Psoas muscle (tissue), 8 donors: ENCODE measurements at regions of chr7 and their contacts with region 1.

Region 1: GRCh38 chr7:68813551-68814080 is 784.7 kb upstream of the AUTS2 start:
- DNase-seq: no peak
- ATAC-seq: no peak
- H3K4me3 ChIP-seq: no peak overlapping the region
- H3K27ac ChIP-seq: no peak overlapping the region
- H3K4me1 ChIP-seq: no peaks in the 10 kb centered on the region
- H3K27me3 ChIP-seq: no peaks in the 10 kb centered on the region
- CTCF ChIP-seq: no peak

Region 2: DNA sequence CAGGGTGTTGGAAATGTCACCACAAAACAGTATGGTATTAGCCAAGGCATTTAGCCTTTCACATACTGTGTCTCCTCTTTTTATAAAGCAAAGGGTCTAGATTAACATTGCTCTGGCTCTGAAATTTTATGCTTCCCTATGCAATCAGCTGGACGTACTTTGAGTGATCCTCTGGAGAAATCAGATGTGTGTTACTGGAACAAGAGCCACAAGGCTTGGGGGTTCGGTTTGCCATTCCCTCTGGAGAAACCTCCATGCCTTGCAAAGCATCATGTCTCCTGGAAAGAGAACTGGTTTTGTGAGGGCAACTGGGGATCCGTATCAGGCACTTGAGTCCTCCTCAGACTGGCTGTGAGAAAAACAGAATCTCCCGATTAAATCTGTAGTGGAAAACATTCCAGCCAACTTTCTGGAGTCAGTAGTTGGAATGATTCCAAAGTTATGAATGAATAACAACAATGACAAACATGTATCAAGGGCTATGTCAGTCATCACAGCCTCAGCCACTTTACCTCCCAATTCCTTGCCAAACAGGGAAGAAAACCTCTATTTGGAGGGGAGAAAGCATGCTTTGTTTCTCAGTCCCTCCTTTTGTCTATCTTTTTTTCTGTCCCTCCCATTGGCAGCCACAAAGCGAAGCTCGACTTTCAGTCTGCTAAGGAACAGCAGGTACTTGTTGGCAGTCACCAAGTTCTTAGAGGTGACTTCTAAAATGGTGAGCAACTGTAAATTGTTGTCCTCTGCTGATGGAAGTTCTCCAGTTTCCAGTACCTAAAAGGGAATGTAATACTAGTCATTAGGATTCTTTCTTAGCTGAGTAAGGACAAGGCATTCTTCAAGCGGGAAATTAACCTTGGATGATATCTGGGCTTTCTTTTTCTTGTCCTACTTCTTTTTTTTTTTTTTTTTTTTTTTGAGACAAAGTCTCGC is 80.1 kb before region 1 on chr7:
- intact Hi-C with region 1: no loop called
- DNase-seq: no peak
- ATAC-seq: peak in 1 of 4 donors; percentile 49
- H3K4me3 ChIP-seq: no peak overlapping the region
- H3K27ac ChIP-seq: no peak overlapping the region
- H3K4me1 ChIP-seq: no peaks in the 10 kb centered on the region
- H3K27me3 ChIP-seq: no peaks in the 10 kb centered on the region
- CTCF ChIP-seq: no peak

Region 3: GRCh38 chr7:68783676-68784075 is 29.9 kb before region 1 on chr7:
- intact Hi-C with region 1: loop called in 1 of 2 experiments (anchors 2 kb)
- DNase-seq: no peak
- ATAC-seq: no peak
- H3K4me3 ChIP-seq: no peak overlapping the region
- H3K27ac ChIP-seq: no peak overlapping the region
- H3K4me1 ChIP-seq: no peaks in the 10 kb centered on the region
- H3K27me3 ChIP-seq: no peaks in the 10 kb centered on the region
- CTCF ChIP-seq: no peak